ENCODE measurements at regions of chr11 and their contacts with region 1.

Region 1: DNA sequence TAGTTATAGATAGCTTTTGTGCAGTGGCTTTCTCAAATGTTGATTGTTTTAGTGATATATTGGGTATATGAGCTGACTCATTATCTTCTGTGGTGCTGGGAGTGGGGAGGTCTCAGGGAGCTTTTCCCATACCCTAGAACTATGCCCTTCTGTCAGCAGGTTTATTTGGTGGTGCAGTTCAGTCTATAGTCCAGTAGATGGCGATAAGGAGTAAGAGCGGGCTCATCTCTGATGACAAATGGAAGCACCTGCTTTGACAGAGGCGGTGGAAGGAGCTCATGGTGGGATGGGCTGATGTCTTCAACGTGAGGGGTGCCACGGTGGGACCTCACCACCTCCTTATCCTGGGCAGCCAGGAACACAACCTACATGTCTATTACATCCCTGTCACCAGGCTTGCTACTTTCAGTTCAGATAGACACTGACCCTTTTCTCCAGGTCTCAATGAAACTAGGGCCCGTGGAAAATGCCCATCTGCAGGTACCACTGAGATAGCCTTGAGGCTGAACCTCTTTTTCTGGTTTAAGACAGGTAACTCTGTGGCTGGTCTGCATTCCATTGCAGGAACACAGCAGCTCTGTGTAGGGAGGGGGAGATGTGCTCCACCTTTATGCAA is 13.0 kb upstream of the OR6A2 start:
- DNase-seq: peak in 9 of 14 experiments; percentile 1 to 68 (median 18)
- ATAC-seq: peak; percentile 88
- H3K4me3 ChIP-seq: no peak overlapping the region
- H3K4me3 Mint-ChIP-seq: no peak overlapping the region
- H3K27ac ChIP-seq: no peak overlapping the region
- H3K27ac Mint-ChIP-seq: no peak overlapping the region
- H3K4me1 ChIP-seq: peaks cover 4% of the 10 kb centered on the region
- H3K4me1 Mint-ChIP-seq: no peaks in the 10 kb centered on the region
- H3K27me3 ChIP-seq: no peaks in the 10 kb centered on the region
- H3K27me3 Mint-ChIP-seq: peaks cover 49% of the 10 kb centered on the region
- CTCF ChIP-seq: peak; percentile 91

Region 2: GRCh38 chr11:6780829-6781228 is 31.7 kb before region 1 on chr11:
- CTCF ChIA-PET with region 1: interaction called, 3 read pairs
- POLR2A ChIA-PET with region 1: no interaction called
- intact Hi-C with region 1: loop called in 1 of 2 experiments (anchors 1 kb)
- DNase-seq: no peak
- ATAC-seq: no peak
- H3K4me3 ChIP-seq: no peak overlapping the region
- H3K4me3 Mint-ChIP-seq: no peak overlapping the region
- H3K27ac ChIP-seq: no peak overlapping the region
- H3K27ac Mint-ChIP-seq: no peak overlapping the region
- H3K4me1 ChIP-seq: no peaks in the 10 kb centered on the region
- H3K4me1 Mint-ChIP-seq: no peaks in the 10 kb centered on the region
- H3K27me3 ChIP-seq: peaks cover 0 to 5% of the 10 kb centered on the region in 2 experiments
- H3K27me3 Mint-ChIP-seq: peaks cover 15% of the 10 kb centered on the region
- CTCF ChIP-seq: no peak

Region 3: DNA sequence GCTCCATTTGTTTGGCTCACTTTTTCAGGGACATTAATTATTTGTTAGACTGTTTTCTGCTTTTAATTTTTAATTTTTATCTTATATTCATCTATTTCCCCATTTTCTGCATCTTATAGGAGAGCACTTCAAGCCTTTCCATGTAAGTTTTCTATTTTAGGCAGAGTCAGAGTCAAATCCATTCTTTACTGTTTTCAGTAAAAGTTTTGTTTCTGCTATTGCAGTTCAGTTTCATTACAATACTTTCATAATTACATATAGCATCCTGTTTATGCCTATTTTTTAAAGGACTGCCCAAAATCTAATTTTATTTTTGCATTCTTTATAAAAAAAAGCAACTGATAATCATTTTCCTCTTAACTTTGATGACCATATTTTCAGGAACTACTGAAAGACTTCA is 29.2 kb after region 1 on chr11:
- CTCF ChIA-PET with region 1: no interaction called
- POLR2A ChIA-PET with region 1: no interaction called
- intact Hi-C with region 1: no loop called
- DNase-seq: no peak
- ATAC-seq: no peak
- H3K4me3 ChIP-seq: no peak overlapping the region
- H3K4me3 Mint-ChIP-seq: no peak overlapping the region
- H3K27ac ChIP-seq: no peak overlapping the region
- H3K27ac Mint-ChIP-seq: no peak overlapping the region
- H3K4me1 ChIP-seq: no peaks in the 10 kb centered on the region
- H3K4me1 Mint-ChIP-seq: no peaks in the 10 kb centered on the region
- H3K27me3 ChIP-seq: peaks cover 0 to 3% of the 10 kb centered on the region in 2 experiments
- H3K27me3 Mint-ChIP-seq: peaks cover 25% of the 10 kb centered on the region
- CTCF ChIP-seq: no peak

Region 4: GRCh38 chr11:6855971-6856541 is 43.6 kb after region 1 on chr11:
- CTCF ChIA-PET with region 1: no interaction called
- POLR2A ChIA-PET with region 1: no interaction called
- intact Hi-C with region 1: no loop called
- DNase-seq: no peak
- ATAC-seq: no peak
- H3K4me3 ChIP-seq: no peak overlapping the region
- H3K4me3 Mint-ChIP-seq: no peak overlapping the region
- H3K27ac ChIP-seq: no peak overlapping the region
- H3K27ac Mint-ChIP-seq: no peak overlapping the region
- H3K4me1 ChIP-seq: no peaks in the 10 kb centered on the region
- H3K4me1 Mint-ChIP-seq: no peaks in the 10 kb centered on the region
- H3K27me3 ChIP-seq: peaks cover 3% of the 10 kb centered on the region in 2 experiments
- H3K27me3 Mint-ChIP-seq: peaks cover 6% of the 10 kb centered on the region
- CTCF ChIP-seq: no peak

Region 5: GRCh38 chr11:6979365-6979978 is 167.0 kb after region 1 on chr11:
- CTCF ChIA-PET with region 1: no interaction called
- POLR2A ChIA-PET with region 1: no interaction called
- intact Hi-C with region 1: no loop called
- DNase-seq: no peak
- ATAC-seq: no peak
- H3K4me3 ChIP-seq: no peak overlapping the region
- H3K4me3 Mint-ChIP-seq: no peak overlapping the region
- H3K27ac ChIP-seq: no peak overlapping the region
- H3K27ac Mint-ChIP-seq: no peak overlapping the region
- H3K4me1 ChIP-seq: no peaks in the 10 kb centered on the region
- H3K4me1 Mint-ChIP-seq: no peaks in the 10 kb centered on the region
- H3K27me3 ChIP-seq: peaks cover 4 to 8% of the 10 kb centered on the region in 2 experiments
- H3K27me3 Mint-ChIP-seq: peaks cover 4% of the 10 kb centered on the region
- CTCF ChIP-seq: no peak

Measured in CD4-positive, alpha-beta T cell (primary cell).